Natural killer cell (primary cell): ENCODE measurements at regions of chr20 and their contacts with region 1.

Region 1: GRCh38 chr20:14055127-14055742 is 59.9 kb downstream of the MACROD2 start:
- DNase-seq: peak in 1 of 2 donors; percentile 45
- ATAC-seq: no peak
- H3K4me3 ChIP-seq: no peak overlapping the region
- H3K4me3 Mint-ChIP-seq: no peak overlapping the region
- H3K27ac ChIP-seq: no peak overlapping the region
- H3K27ac Mint-ChIP-seq: no peak overlapping the region
- H3K4me1 ChIP-seq: no peaks in the 10 kb centered on the region
- H3K4me1 Mint-ChIP-seq: no peaks in the 10 kb centered on the region
- H3K27me3 ChIP-seq: no peaks in the 10 kb centered on the region
- H3K27me3 Mint-ChIP-seq: no peaks in the 10 kb centered on the region
- CTCF ChIP-seq: peak; percentile 59

Region 2: DNA sequence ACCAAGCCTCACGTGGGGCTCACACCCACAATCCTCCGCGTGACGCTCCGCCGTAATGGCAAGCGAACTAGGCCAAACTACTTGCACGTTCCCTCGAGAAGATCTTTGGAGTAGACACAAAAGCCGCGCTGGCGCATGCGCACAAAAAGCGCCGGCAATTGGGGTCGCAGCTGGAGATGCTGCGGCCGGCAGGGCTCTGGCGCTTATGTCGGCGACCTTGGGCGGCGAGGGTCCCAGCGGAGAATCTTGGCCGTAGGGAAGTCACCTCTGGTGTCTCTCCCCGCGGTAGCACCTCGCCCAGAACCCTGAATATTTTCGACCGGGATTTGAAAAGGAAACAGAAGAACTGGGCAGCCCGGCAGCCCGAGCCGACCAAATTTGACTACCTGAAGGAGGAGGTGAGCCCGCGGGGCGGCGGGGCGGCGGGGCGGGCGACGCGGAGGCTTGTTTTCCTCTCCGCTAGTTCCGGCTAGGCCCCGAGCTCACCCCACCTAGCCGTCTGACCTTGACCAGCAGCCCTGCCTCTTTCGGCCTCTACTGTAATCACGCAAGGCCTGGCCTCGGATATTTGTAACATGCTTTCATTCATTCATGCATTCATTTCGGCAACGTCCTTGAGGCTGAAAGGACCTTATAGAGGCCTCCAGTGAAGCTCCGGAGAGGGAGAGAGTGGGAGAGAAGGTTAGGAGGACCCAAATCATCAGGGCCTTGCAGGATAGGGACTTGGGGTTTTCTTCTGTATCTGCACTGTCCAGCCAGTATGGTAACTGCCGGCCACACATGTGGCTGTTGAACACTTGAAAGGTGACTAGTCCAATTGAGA is 270.1 kb before region 1 on chr20 and contains the starts of genes ESF1 and NDUFAF5:
- intact Hi-C with region 1: no loop called
- DNase-seq: peak; percentile 85 to 96
- ATAC-seq: peak; percentile 96 to 99 (median 98)
- H3K4me3 ChIP-seq: peak within 1 kb of the TSS; percentile 87
- H3K4me3 Mint-ChIP-seq: peak within 1 kb of the TSS; percentile 97
- H3K27ac ChIP-seq: peak within 1 kb of the TSS; percentile 89
- H3K27ac Mint-ChIP-seq: peak within 1 kb of the TSS; percentile 98 to 99
- H3K4me1 ChIP-seq: peaks cover 17% of the 10 kb centered on the region
- H3K4me1 Mint-ChIP-seq: peaks cover 37 to 50% of the 10 kb centered on the region in 2 donors
- H3K27me3 ChIP-seq: no peaks in the 10 kb centered on the region
- H3K27me3 Mint-ChIP-seq: no peaks in the 10 kb centered on the region
- CTCF ChIP-seq: no peak
- total RNA-seq, gene ESF1: 8.4 to 11.1 (median 10.0) TPM
- total RNA-seq, gene NDUFAF5: 63.4 to 75.9 (median 63.7) TPM

Region 3: DNA sequence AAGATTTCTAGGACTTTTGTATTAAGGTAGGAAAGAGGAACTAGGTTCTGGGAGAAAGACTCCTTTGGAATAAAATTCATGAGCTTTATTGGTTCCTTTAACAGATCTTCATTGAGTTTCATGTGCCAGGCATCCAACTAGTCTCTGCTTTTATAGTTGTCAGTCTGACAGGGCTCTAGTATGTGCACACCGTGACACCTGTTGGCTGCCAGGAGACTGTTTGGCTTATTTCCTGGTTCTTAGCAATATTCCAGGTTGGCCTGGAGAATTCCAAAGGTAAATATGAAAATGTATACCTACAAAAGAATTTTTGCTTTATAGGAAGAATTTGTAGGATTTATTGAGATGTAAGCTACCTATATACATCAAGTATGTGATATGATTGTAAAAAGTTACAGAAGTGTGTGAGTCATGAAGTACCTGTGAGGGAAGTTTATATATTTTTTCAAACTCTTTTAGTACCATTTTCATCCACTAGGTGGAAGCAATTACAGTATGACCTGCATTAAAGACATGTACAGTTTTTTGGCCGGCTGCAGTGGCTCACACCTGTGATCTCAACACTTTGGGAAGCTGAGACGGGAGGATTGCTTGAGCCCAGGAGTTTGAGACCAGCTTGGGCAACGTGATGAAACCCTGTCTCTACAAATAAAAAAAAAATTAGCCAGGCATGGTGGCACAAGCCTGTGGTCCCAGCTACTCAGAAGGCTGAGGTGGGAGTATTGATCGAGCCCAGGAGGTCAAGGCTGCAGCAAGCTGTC is 235.2 kb before region 1 on chr20:
- intact Hi-C with region 1: loop called (anchors 2 kb)
- DNase-seq: peak in 1 of 2 donors; percentile 60
- ATAC-seq: peak in 2 of 3 donors; percentile 49 to 64
- H3K4me3 ChIP-seq: no peak overlapping the region
- H3K4me3 Mint-ChIP-seq: no peak overlapping the region
- H3K27ac ChIP-seq: no peak overlapping the region
- H3K27ac Mint-ChIP-seq: no peak overlapping the region
- H3K4me1 ChIP-seq: no peaks in the 10 kb centered on the region
- H3K4me1 Mint-ChIP-seq: peaks cover 0 to 5% of the 10 kb centered on the region in 2 donors
- H3K27me3 ChIP-seq: no peaks in the 10 kb centered on the region
- H3K27me3 Mint-ChIP-seq: no peaks in the 10 kb centered on the region
- CTCF ChIP-seq: peak; percentile 74

Region 4: GRCh38 chr20:14030991-14031390 is 24.2 kb before region 1 on chr20:
- intact Hi-C with region 1: no loop called
- DNase-seq: no peak
- ATAC-seq: no peak
- H3K4me3 ChIP-seq: no peak overlapping the region
- H3K4me3 Mint-ChIP-seq: no peak overlapping the region
- H3K27ac ChIP-seq: no peak overlapping the region
- H3K27ac Mint-ChIP-seq: no peak overlapping the region
- H3K4me1 ChIP-seq: no peaks in the 10 kb centered on the region
- H3K4me1 Mint-ChIP-seq: no peaks in the 10 kb centered on the region
- H3K27me3 ChIP-seq: no peaks in the 10 kb centered on the region
- H3K27me3 Mint-ChIP-seq: no peaks in the 10 kb centered on the region
- CTCF ChIP-seq: no peak

Region 5: DNA sequence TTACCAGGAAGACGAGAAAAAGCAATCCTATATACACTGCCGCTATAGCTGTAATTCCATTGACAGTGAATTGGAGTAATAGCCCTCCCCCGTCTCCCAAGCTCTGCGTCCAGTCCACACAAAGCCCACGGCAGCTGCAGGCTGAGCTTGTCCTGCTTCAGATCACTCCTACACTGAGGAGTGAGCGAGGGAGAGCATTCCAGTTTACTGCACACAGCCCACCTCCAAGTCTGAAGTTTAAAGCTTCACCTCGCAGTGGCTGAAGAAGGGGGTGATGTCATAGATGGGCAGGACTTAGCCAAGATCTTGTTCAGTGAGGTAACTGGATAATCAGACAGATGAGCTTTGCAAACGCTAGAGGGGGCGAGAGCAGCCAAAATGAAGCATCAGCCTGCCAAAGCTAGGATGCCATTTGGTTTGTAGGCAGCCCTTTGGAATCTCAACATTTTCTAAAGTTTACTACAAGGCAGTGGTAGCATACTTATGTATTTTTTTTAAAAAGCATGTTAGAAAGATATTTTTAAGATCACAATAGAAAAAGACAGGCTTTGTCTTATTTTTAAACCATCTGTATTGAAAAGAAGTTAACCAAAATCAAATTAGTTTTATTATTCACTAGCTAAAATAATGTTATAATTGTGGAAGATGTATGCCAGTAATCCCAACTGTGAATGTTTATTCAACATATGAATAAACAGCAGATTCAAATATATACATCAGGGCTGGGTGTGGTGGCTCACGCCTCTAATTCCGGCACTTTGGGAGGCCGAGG is 282.4 kb after region 1 on chr20 and contains the start of gene FLRT3:
- intact Hi-C with region 1: no loop called
- DNase-seq: no peak
- ATAC-seq: no peak
- H3K4me3 ChIP-seq: no peak within 1 kb of the TSS
- H3K4me3 Mint-ChIP-seq: no peak within 1 kb of the TSS
- H3K27ac ChIP-seq: no peak within 1 kb of the TSS
- H3K27ac Mint-ChIP-seq: no peak within 1 kb of the TSS
- H3K4me1 ChIP-seq: no peaks in the 10 kb centered on the region
- H3K4me1 Mint-ChIP-seq: no peaks in the 10 kb centered on the region
- H3K27me3 ChIP-seq: no peaks in the 10 kb centered on the region
- H3K27me3 Mint-ChIP-seq: no peaks in the 10 kb centered on the region
- CTCF ChIP-seq: no peak
- total RNA-seq, gene FLRT3: not detected